ENCODE measurements at regions of chr1 and their contacts with region 1.

Region 1: GRCh38 chr1:204746838-204747442 is 61.4 kb upstream of the LRRN2 start:
- DNase-seq: peak; percentile 50 to 67
- ATAC-seq: peak; percentile 81 to 89
- H3K4me3 ChIP-seq: no peak overlapping the region
- H3K27ac ChIP-seq: no peak overlapping the region
- H3K4me1 ChIP-seq: peaks cover 10% of the 10 kb centered on the region
- CTCF ChIP-seq: peak; percentile 76
- EP300 ChIP-seq: no peak
- POLR2A ChIP-seq: no peak
- RAD21 ChIP-seq: peak; percentile 42 to 51; a peak in 4 of 5 replicates

Region 2: DNA sequence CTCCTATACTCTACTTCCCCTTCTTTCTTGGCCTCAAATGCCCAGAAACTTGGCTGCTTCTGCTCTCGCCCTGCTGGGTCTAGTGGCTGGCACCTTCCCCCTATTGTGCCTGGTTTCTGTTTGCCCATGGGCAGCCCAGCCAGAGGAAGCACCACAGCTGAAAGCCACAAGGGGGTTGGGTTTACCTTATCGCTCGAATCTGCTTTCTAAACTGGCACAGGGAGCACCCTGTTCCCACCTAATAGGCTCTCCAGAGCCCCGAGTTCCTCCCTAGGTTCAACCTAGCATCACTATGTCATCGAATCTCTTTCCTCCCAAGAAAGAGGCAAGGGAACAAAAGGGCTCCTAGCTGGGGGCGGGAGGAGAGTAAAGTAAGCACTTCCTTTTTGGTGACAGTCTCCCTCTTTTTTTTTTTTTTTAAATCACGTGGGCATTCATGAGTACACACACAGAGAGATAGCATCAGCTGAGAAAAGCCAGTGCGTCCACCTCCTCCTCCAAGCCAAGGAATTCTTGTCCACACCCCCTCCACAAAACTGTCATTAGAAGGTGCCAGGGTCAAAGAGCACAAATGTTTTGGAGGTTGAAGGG is 460.0 kb before region 1 on chr1:
- CTCF ChIA-PET with region 1: no interaction called
- POLR2A ChIA-PET with region 1: no interaction called
- DNase-seq: peak; percentile 30 to 48
- ATAC-seq: peak; percentile 22 to 40
- H3K4me3 ChIP-seq: peak overlapping the region; percentile 38
- H3K27ac ChIP-seq: peak overlapping the region; percentile 71 to 85
- H3K4me1 ChIP-seq: peaks cover 69% of the 10 kb centered on the region
- CTCF ChIP-seq: no peak
- EP300 ChIP-seq: no peak
- POLR2A ChIP-seq: no peak
- RAD21 ChIP-seq: no peak

Region 3: GRCh38 chr1:204494281-204495077 is 252.5 kb before region 1 on chr1 and contains the start of gene PIK3C2B:
- CTCF ChIA-PET with region 1: no interaction called
- POLR2A ChIA-PET with region 1: no interaction called
- DNase-seq: peak; percentile 85 to 97
- ATAC-seq: peak; percentile 95 to 97
- H3K4me3 ChIP-seq: peak within 1 kb of the TSS; percentile 70
- H3K27ac ChIP-seq: peak within 1 kb of the TSS; percentile 87 to 94
- H3K4me1 ChIP-seq: peaks cover 24% of the 10 kb centered on the region; the same call in 2 of the 3 replicates
- CTCF ChIP-seq: peak; percentile 20; the same call in 2 of the 3 replicates
- EP300 ChIP-seq: no peak
- POLR2A ChIP-seq: peak; percentile 93
- RAD21 ChIP-seq: peak; percentile 26 to 55; a peak in 3 of 5 replicates
- polyA plus RNA-seq, gene PIK3C2B: 9.2 and 13.0 TPM in 2 replicates

Region 4: DNA sequence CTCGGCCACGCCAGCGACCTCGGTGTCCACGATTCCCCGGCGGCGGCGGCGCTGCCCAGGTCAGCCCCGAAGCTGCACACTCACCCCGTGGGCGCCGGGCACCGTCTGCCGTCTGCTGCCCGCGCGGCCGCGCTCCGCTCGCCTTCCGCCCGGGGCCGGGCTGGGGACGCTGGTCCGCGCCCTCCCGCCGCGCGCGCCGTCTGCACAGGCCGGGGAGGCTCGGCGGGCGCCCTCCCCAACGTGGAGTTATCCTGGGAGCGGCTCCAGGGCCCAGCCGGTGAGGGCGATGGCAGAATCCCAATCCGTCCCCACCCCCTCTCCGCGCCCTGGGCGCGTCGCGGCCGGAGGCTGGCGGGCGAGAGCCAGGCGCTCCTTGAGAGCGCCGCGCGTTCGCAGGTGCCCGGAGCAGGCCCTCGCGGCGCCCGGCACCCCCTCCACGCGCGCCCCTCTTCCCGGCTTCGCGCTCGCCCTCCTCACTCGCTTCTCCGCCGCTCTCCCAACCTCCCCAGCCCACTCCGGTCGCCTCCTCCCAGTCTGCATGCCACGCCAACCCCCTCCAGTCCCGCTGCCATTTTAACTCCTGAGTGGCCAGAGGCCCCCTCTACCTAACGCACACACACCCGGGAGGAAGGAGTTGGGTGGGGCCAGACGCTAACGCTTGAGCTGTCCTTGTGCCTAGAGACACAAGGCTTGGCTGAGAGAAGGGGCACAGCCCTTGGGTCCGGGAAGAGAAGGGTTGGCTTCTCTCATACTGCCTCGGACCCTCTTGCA is 61.5 kb before region 1 on chr1 and contains the start of gene LRRN2:
- CTCF ChIA-PET with region 1: interaction called, 15 read pairs
- POLR2A ChIA-PET with region 1: no interaction called
- DNase-seq: peak; percentile 28 to 60
- ATAC-seq: peak; percentile 69
- H3K4me3 ChIP-seq: peak within 1 kb of the TSS; percentile 65
- H3K27ac ChIP-seq: peak within 1 kb of the TSS; percentile 82 to 98
- H3K4me1 ChIP-seq: peaks cover 14% of the 10 kb centered on the region
- CTCF ChIP-seq: no peak
- EP300 ChIP-seq: no peak
- POLR2A ChIP-seq: no peak; the same call in none of the 2 replicates
- RAD21 ChIP-seq: no peak
- polyA plus RNA-seq, gene LRRN2: 3.6 and 4.3 TPM in 2 replicates

Region 5: DNA sequence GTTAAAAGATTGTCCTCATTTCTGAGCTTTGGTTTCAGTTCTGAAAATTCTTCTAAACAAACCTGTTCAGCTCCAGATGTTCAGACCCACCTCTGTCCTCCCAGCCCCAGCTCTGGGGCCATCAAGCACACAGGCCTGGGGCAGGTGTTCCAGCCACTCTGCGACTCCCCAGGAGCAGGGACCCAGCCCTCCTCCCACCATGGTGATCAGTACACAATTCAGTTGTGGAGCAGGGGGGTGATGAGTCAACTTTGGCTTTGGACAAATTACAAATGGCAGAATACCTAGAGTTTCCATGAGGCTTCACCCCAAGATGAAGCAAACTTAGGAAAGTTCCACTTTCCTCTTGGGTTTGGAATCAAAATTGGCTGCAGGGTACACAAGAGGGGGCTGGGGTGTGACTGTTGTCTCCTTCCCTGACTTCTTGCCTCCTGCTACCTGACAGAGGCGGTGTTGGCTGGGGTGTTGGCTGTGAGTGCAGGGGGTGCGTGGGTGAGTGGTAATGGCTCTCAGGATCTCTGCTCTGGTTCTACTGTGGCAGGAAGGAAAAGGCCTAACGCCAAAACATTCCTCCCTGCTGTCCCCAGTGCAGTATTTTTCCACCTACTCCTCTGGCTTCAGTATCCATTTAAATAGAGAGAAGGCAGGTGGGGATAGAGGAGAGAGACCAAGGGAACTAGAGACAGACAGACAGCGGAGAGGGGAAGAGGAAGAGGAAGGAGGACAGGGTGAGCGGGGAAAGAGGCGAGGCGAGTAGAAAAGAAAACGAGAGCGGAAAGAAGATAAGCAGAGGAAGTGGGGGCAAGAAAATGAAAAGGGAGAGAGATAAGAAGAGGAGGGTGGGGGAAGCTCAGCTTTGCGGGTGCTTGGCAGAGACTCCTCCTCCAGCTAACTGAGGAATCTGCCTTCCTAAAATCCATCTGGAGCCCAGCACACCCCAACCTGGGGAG is 40.8 kb before region 1 on chr1:
- CTCF ChIA-PET with region 1: interaction called, 13 read pairs
- POLR2A ChIA-PET with region 1: no interaction called
- DNase-seq: no peak
- ATAC-seq: no peak
- H3K4me3 ChIP-seq: no peak overlapping the region
- H3K27ac ChIP-seq: peak overlapping the region in 1 of 2 experiments; percentile 9; a peak in 1 of 6 replicates
- H3K4me1 ChIP-seq: peaks cover 21% of the 10 kb centered on the region
- CTCF ChIP-seq: no peak
- EP300 ChIP-seq: no peak
- POLR2A ChIP-seq: no peak
- RAD21 ChIP-seq: no peak

Region 6: DNA sequence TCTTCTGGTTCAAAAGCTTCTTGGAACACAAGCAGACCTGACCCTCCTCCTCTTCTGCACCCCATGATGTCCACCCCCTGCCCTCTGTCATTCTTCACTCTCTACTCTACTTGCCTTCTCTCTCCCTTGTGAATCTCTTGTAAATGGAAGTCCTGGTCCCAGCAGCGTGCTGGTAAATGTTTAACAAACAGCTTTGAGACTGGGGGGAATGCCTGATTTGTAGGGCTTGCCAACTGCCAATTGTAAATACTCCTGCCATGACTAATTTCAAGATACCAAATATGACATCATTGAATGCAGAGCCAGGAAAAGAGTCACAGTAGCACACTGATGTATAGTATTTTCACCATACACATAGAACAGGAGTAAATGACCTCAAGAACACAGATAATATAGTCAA is 20.5 kb before region 1 on chr1:
- CTCF ChIA-PET with region 1: interaction called, 25 read pairs
- POLR2A ChIA-PET with region 1: no interaction called
- DNase-seq: peak; percentile 90 to 96
- ATAC-seq: peak; percentile 87 to 90
- H3K4me3 ChIP-seq: 0 out of 3 replicates have a peak overlapping the region, but pooled peaks have one; percentile 6
- H3K27ac ChIP-seq: peak overlapping the region; percentile 45 to 82; a peak in 5 of 6 replicates
- H3K4me1 ChIP-seq: peaks cover 48% of the 10 kb centered on the region
- CTCF ChIP-seq: no peak
- EP300 ChIP-seq: no peak
- POLR2A ChIP-seq: no peak
- RAD21 ChIP-seq: no peak

Region 7: DNA sequence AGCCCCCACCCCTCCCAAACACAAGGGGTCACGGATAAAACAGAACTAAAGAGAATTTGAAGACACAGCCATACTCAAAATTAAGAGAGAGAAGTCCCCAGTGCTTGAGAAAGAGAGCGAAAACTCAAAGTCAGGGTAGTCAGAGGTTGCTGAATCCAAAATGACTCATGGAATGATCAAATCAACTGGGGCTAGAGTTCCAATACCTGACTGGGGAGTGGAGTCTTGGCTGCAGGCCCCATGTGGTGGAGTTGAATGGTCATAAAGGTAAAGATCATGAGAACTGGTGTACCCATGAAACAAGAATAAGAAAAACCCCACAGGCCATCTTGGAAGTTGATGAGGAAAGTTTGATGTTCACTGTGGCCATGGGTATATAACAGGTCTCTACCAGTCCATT is 23.1 kb after region 1 on chr1:
- CTCF ChIA-PET with region 1: interaction called, 81 read pairs
- POLR2A ChIA-PET with region 1: no interaction called
- DNase-seq: no peak
- ATAC-seq: no peak
- H3K4me3 ChIP-seq: no peak overlapping the region
- H3K27ac ChIP-seq: no peak overlapping the region
- H3K4me1 ChIP-seq: no peaks in the 10 kb centered on the region
- CTCF ChIP-seq: no peak
- EP300 ChIP-seq: no peak
- POLR2A ChIP-seq: no peak
- RAD21 ChIP-seq: no peak

Region 8: DNA sequence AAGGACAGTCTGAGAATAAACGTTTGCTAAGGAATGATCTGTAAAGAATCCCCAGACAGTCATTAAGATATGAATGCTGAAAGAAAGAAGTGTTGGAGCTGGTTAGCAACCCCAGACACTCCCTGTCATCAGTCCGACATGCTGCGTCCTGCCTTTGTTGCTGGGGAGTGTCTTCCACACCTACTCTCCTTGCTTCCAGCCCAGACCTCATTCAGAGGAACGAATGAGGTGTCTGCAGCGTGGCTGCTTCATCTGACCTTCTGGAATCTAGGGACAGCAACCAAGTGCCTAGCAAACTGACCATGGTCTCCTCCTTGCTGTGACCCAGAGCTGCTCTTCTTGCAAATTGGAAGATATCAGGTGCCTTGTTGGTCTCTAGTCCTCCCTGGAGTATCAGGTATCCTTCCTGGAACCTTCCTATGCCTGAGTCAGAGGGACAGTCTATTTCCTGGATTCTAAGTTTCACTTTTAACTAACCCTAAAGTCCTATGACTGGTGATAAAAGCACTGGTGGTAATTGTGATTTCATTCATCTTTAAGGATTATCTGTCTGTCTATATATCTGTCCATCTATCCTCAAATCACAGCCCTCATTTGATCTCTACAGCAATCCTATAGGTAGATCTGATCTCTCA is 169.0 kb after region 1 on chr1:
- CTCF ChIA-PET with region 1: no interaction called
- POLR2A ChIA-PET with region 1: no interaction called
- DNase-seq: no peak
- ATAC-seq: peak; percentile 24 to 25; a peak in 2 of 6 replicates
- H3K4me3 ChIP-seq: no peak overlapping the region
- H3K27ac ChIP-seq: no peak overlapping the region
- H3K4me1 ChIP-seq: no peaks in the 10 kb centered on the region
- CTCF ChIP-seq: no peak
- EP300 ChIP-seq: no peak
- POLR2A ChIP-seq: no peak
- RAD21 ChIP-seq: no peak

Measured in A549 (cell line).